Calu3 (cell line): ENCODE measurements at regions of chr6 and their contacts with region 1.

Region 1: DNA sequence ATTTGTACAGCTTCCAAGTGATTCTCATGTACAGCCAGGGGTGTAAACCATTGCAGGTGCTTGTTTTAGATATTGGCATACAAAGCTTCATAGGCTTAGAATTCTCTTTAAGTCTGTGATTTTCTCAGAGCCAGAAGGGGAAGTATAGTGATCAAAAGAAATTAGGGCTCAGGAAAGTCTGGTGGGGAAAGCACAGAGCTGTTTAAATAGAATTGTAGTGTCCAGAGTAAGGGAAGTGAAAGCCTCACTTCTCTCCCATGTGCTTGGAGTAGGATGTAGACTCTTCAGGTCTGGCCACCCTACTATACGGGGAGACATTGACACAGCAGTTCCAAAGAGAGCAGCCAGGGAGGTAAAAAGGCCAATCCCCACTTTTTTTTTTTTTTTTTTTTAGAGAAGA is 10.4 kb downstream of the GCNT2 start:
- DNase-seq: no peak
- H3K4me3 Mint-ChIP-seq: peak overlapping the region; percentile 86
- H3K27ac Mint-ChIP-seq: peak overlapping the region; percentile 76
- H3K4me1 Mint-ChIP-seq: peaks cover 18% of the 10 kb centered on the region
- H3K27me3 Mint-ChIP-seq: no peaks in the 10 kb centered on the region
- CTCF ChIP-seq: no peak

Region 2: DNA sequence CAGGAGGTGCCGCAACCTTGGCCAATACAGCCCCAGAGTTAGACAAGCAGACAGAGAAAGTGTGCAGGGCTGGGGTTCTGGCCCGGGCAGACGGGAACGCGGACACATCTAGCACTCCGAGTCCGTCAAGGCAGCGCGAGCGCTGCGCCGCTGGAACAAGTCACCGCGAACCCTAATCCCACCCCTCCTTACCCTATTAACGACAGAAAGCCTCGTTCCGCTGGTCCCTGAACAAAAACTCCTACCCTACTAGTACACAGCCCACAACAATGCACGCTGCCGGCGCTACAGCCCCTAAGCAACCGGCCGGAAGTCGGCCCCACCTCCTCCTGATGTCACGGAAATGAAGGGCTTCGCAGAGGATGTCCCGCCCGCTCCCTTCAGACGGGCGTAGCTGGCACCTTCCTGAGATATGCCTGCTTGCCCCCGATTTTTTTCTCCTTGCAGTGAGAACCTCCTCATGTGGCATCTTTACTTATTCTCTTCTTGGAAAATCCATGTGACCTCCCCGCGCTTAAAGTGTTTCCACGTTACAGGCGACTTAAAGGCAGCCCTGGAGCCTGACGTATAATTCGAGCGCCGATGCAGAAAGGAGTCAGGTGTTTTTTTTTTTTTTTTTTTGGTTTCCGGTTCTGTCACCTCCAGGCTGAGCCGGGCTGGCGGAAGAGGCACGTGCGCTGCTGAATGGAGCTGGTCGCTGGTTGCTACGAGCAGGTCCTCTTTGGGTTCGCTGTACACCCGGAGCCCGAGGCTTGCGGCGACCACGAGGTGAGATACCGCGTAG is 163.0 kb after region 1 on chr6 and contains the starts of genes C6orf52 and PAK1IP1:
- CTCF ChIA-PET with region 1: no interaction called
- intact Hi-C with region 1: no loop called
- DNase-seq: peak; percentile 81
- H3K4me3 Mint-ChIP-seq: peak within 1 kb of the TSS; percentile 93
- H3K27ac Mint-ChIP-seq: peak within 1 kb of the TSS; percentile 100
- H3K4me1 Mint-ChIP-seq: no peaks in the 10 kb centered on the region
- H3K27me3 Mint-ChIP-seq: no peaks in the 10 kb centered on the region
- CTCF ChIP-seq: no peak
- total RNA-seq, gene C6orf52: not detected in 2 replicates
- total RNA-seq, gene PAK1IP1: 14.3 and 15.8 TPM in 2 replicates

Region 3: DNA sequence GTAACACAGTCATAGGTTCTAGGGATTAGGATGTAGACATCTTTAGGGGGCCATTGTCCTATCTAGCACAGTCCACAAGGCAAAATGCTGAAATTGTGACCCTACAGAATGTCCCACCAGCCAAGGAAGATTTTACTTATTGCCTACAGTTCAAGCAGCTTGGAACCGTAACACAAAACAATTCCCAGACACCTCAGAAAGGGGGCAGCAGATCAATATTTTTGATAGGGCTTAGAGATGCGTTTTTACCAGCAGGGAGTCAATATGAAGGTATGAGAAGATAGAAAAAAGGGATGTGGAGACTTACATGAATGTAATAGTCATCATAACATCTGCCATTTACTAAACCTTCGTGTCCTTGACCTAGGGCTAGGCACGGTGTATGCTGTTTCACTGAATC is 1087.0 kb after region 1 on chr6:
- CTCF ChIA-PET with region 1: interaction called, 10 read pairs
- intact Hi-C with region 1: no loop called
- DNase-seq: no peak
- H3K4me3 Mint-ChIP-seq: no peak overlapping the region
- H3K27ac Mint-ChIP-seq: no peak overlapping the region
- H3K4me1 Mint-ChIP-seq: no peaks in the 10 kb centered on the region
- H3K27me3 Mint-ChIP-seq: no peaks in the 10 kb centered on the region
- CTCF ChIP-seq: no peak